Pancreas (tissue), 10 donors: ENCODE measurements at regions of chr7 and their contacts with region 1.

Region 1: DNA sequence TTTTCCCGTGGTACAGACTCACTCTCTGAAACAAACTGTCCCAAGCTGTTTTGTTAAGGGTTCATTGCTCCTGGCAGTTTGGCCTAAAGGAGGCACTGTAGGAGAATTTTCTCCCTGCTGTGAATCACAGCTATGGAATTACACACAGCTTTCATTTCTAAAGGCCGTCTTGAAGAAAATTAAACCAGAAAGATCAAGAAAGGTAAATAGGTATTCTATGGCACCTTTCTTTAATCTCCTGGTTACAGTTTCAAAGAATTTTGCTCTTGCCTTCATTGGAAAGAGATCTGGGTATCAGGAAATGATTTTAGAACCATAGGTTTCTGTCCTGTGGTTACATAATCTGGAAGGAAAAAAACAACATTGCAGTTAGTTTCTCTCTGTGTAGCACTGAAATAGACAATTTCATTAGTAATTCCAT is 51.2 kb downstream of the PDK4 start:
- DNase-seq: peak in 3 of 6 donors; percentile 50 to 65 (median 61)
- ATAC-seq: peak; percentile 55 to 83 (median 82)
- H3K4me3 ChIP-seq: peak overlapping the region in 2 of 4 donors; percentile 12 to 19
- H3K27ac ChIP-seq: peak overlapping the region; percentile 47 to 73 (median 68)
- H3K4me1 ChIP-seq: peaks cover 33 to 44% (median 36%) of the 10 kb centered on the region in 3 donors
- H3K27me3 ChIP-seq: no peaks in the 10 kb centered on the region
- CTCF ChIP-seq: peak; percentile 29 to 55 (median 45)

Region 2: DNA sequence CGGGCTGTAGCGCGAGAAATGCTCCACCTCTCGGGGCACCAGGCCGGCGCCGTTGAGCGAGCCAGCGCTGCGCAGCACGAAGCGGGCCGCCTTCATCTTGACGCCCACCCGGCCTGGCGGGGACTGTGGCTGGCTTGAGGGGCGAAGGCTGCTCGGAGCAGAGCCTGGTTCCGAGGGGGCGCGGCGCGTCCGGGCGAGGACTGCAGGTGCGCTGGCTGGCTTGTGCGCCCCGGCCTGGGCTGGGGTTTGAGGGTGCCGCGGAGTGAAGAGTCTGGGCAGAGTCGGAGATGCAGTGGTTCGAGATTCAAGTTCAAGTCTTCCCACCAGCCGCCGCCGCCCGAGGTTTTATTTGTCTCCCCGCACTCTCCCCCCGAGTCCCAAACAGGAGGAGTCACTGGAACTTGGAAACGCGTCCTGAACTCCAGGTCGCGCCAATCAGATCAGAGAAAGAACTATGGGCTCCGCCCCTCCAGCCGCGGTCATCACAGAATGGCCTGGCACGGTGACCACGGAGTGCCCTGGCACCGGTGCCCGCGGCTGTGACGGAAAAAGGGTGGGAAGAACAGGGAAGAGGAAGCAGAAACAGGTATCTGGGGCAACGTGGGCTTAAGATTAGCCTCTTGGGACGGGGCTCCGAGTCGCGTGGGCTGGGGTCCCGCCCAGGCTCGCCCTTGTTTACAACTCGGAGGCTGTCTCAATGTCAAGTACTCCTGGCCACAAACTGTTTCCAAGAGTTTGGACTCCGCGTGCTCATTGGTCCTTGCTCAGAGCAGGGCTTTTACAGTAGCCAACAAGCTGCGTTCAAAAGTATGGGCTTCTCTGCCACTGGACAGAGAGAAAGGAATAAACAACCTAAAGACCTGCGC is 51.3 kb after region 1 on chr7 and contains the start of gene PDK4:
- intact Hi-C with region 1: loop called in 2 of 3 experiments (anchors 10 kb)
- DNase-seq: peak; percentile 92 to 98 (median 96)
- ATAC-seq: peak; percentile 79 to 96 (median 92)
- H3K4me3 ChIP-seq: peak within 1 kb of the TSS; percentile 39 to 89 (median 83)
- H3K27ac ChIP-seq: peak within 1 kb of the TSS; percentile 96 to 98 (median 98)
- H3K4me1 ChIP-seq: peaks cover 9 to 28% (median 28%) of the 10 kb centered on the region in 3 donors
- H3K27me3 ChIP-seq: no peaks in the 10 kb centered on the region
- CTCF ChIP-seq: no peak
- total RNA-seq, gene PDK4: 20.4 to 679 (median 53.0) TPM

Region 3: GRCh38 chr7:95608359-95609173 is 63.5 kb after region 1 on chr7:
- intact Hi-C with region 1: loop called in 1 of 3 experiments (anchors 10 kb)
- DNase-seq: peak; percentile 79 to 96 (median 93)
- ATAC-seq: peak; percentile 92 to 98 (median 95)
- H3K4me3 ChIP-seq: peak overlapping the region in 2 of 4 donors; percentile 17 to 19
- H3K27ac ChIP-seq: peak overlapping the region; percentile 92 to 98 (median 94)
- H3K4me1 ChIP-seq: peaks cover 13 to 45% (median 42%) of the 10 kb centered on the region in 3 donors
- H3K27me3 ChIP-seq: no peaks in the 10 kb centered on the region
- CTCF ChIP-seq: no peak